ENCODE measurements at regions of chr13 and their contacts with region 1.

Region 1: GRCh38 chr13:45132369-45133064 is 12.2 kb downstream of the GTF2F2 start:
- DNase-seq: no peak
- ATAC-seq: peak; percentile 92
- H3K4me3 Mint-ChIP-seq: peak overlapping the region; percentile 42
- H3K27ac Mint-ChIP-seq: peak overlapping the region; percentile 73
- H3K4me1 Mint-ChIP-seq: peaks cover 50% of the 10 kb centered on the region
- H3K27me3 Mint-ChIP-seq: no peaks in the 10 kb centered on the region
- CTCF ChIP-seq: no peak

Region 2: GRCh38 chr13:45119991-45120864 is 12.3 kb before region 1 on chr13 and contains the start of gene GTF2F2:
- CTCF ChIA-PET with region 1: no interaction called
- POLR2A ChIA-PET with region 1: interaction called, 4 read pairs
- intact Hi-C with region 1: loop called (anchors 1 kb)
- DNase-seq: peak; percentile 90
- ATAC-seq: peak; percentile 82
- H3K4me3 Mint-ChIP-seq: no peak within 1 kb of the TSS
- H3K27ac Mint-ChIP-seq: no peak within 1 kb of the TSS
- H3K4me1 Mint-ChIP-seq: peaks cover 9% of the 10 kb centered on the region
- H3K27me3 Mint-ChIP-seq: no peaks in the 10 kb centered on the region
- CTCF ChIP-seq: no peak
- total RNA-seq, gene GTF2F2: 19.4 and 19.8 TPM in 2 replicates

Region 3: GRCh38 chr13:45194081-45194939 is 61.8 kb after region 1 on chr13:
- CTCF ChIA-PET with region 1: no interaction called
- POLR2A ChIA-PET with region 1: no interaction called
- intact Hi-C with region 1: no loop called
- DNase-seq: no peak
- ATAC-seq: no peak
- H3K4me3 Mint-ChIP-seq: no peak overlapping the region
- H3K27ac Mint-ChIP-seq: no peak overlapping the region
- H3K4me1 Mint-ChIP-seq: peaks cover 18% of the 10 kb centered on the region
- H3K27me3 Mint-ChIP-seq: no peaks in the 10 kb centered on the region
- CTCF ChIP-seq: no peak

Region 4: DNA sequence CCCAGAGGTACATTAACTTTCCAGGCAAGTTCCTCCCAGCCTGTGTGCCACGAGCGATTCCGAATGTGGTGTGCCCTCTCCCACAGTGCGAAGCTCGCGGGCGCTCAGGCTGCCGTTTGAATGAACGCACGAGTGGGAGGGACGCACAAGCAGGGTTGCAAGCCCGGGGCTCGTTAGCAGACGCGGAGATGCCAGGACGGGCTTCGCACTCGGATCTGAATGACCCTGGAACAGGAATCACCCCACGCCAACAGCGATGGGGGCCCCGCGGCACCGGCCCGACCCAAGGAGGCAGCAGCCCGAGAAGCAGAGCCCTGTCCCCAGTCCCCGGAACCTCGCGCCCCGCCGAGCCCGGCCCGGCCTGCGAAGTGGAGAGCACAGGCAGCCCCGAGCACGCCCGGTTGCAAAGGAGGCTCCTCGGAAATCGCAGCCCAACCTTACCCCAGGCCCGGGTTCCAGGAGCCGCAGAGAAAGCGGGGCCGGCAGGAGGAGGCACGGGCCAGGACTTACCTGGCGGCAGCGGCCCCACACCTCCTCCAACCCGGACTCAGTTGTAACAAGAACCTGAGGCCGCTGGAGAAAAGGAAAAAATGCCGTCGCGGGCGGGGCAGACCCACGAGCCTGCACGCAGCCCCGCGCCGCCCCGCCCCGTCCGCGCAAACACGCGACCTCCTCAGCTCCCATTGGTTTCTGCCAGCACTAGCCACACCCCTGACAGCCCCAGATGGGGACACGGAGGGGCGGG is 285.4 kb after region 1 on chr13 and contains the start of gene SLC25A30:
- CTCF ChIA-PET with region 1: no interaction called
- POLR2A ChIA-PET with region 1: no interaction called
- intact Hi-C with region 1: no loop called
- DNase-seq: peak; percentile 87
- ATAC-seq: peak; percentile 96
- H3K4me3 Mint-ChIP-seq: peak within 1 kb of the TSS; percentile 95
- H3K27ac Mint-ChIP-seq: peak within 1 kb of the TSS; percentile 97
- H3K4me1 Mint-ChIP-seq: peaks cover 22% of the 10 kb centered on the region
- H3K27me3 Mint-ChIP-seq: no peaks in the 10 kb centered on the region
- CTCF ChIP-seq: no peak
- total RNA-seq, gene SLC25A30: 19.0 and 19.3 TPM in 2 replicates

Measured in activated B cell treated with CpG ODN at 0.5 μM for 24 hours (primary cell).